H1 (cell line): ENCODE measurements at regions of chr11 and their contacts with region 1.

Region 1: GRCh38 chr11:44133335-44133946 is 38.0 kb downstream of the EXT2 start:
- DNase-seq: no peak
- H3K4me3 ChIP-seq: no peak overlapping the region
- H3K27ac ChIP-seq: no peak overlapping the region
- H3K4me1 ChIP-seq: no peaks in the 10 kb centered on the region
- H3K27me3 ChIP-seq: no peaks in the 10 kb centered on the region
- CTCF ChIP-seq: peak in 2 of 3 experiments; percentile 57 to 65; a peak in 2 of 4 replicates
- EP300 ChIP-seq: no peak
- POLR2A ChIP-seq: no peak
- RAD21 ChIP-seq: peak; percentile 75 to 83

Region 2: GRCh38 chr11:44110231-44110679 is 23.2 kb before region 1 on chr11:
- CTCF ChIA-PET with region 1: interaction called, 10 read pairs
- POLR2A ChIA-PET with region 1: no interaction called
- DNase-seq: peak in 1 of 2 experiments; percentile 71
- H3K4me3 ChIP-seq: no peak overlapping the region
- H3K27ac ChIP-seq: no peak overlapping the region
- H3K4me1 ChIP-seq: peaks cover 0 to 2% (median 0%) of the 10 kb centered on the region in 4 experiments; a peak in 1 of 7 replicates
- H3K27me3 ChIP-seq: peaks cover 0 to 1% (median 0%) of the 10 kb centered on the region in 4 experiments; a peak in 1 of 7 replicates
- CTCF ChIP-seq: peak; percentile 75 to 81 (median 78)
- EP300 ChIP-seq: no peak
- POLR2A ChIP-seq: no peak
- RAD21 ChIP-seq: peak; percentile 82 to 85

Region 3: DNA sequence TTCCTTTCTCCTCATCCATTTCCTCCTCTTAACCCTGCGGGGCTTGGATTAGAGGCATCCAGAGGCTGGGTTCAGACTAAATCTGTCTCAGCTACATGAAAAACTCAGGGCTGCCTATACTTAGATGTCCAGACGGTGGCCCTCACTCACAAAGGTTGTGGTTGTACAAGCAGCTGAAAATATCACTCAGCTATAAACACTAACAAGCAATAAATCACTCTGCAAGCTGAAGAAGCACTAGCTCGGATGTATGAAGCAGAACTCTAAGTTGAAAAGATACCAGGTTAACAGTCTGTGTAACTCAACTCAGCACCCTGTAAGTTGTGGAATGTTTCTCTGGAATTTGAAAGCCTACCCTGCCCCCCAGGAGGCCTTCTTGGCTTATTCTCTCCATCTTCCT is 44.9 kb after region 1 on chr11:
- CTCF ChIA-PET with region 1: interaction called, 22 read pairs
- POLR2A ChIA-PET with region 1: no interaction called
- DNase-seq: no peak
- H3K4me3 ChIP-seq: peak overlapping the region in 1 of 4 experiments; percentile 10; a peak in 1 of 8 replicates
- H3K27ac ChIP-seq: no peak overlapping the region
- H3K4me1 ChIP-seq: peaks cover 3 to 12% (median 8%) of the 10 kb centered on the region in 4 experiments; a peak in 5 of 7 replicates
- H3K27me3 ChIP-seq: no peaks in the 10 kb centered on the region
- CTCF ChIP-seq: no peak
- EP300 ChIP-seq: no peak
- POLR2A ChIP-seq: no peak
- RAD21 ChIP-seq: peak in 1 of 2 experiments; percentile 4; a peak in 1 of 4 replicates

Region 4: GRCh38 chr11:44269369-44270351 is 136.2 kb after region 1 on chr11:
- CTCF ChIA-PET with region 1: interaction called, 20 read pairs
- POLR2A ChIA-PET with region 1: no interaction called
- DNase-seq: no peak
- H3K4me3 ChIP-seq: no peak overlapping the region
- H3K27ac ChIP-seq: no peak overlapping the region
- H3K4me1 ChIP-seq: no peaks in the 10 kb centered on the region; a peak in 2 of 7 replicates
- H3K27me3 ChIP-seq: no peaks in the 10 kb centered on the region
- CTCF ChIP-seq: no peak
- EP300 ChIP-seq: no peak
- POLR2A ChIP-seq: no peak
- RAD21 ChIP-seq: no peak

Region 5: DNA sequence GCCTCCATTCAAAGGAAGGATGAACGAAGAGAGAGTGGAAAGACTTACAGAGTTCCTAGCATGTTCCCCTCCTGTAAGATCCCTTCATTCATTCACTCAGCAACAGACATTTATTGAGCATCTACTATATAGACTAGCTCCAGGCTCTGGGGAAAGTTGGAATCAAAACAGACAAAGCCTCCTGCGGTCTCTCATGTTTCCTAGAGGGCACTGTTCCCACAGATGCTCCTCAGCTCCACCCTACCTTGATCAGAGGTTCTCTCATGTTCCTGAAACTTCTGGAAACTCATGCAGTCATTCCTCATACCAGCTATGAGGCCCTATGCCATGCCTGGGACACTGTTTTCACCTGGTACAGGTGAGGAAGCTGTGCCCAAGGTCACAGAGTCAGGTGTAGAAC is 165.4 kb after region 1 on chr11:
- CTCF ChIA-PET with region 1: interaction called, 28 read pairs
- POLR2A ChIA-PET with region 1: no interaction called
- DNase-seq: no peak
- H3K4me3 ChIP-seq: no peak overlapping the region
- H3K27ac ChIP-seq: no peak overlapping the region
- H3K4me1 ChIP-seq: peaks cover 0 to 7% (median 1%) of the 10 kb centered on the region in 4 experiments; a peak in 2 of 7 replicates
- H3K27me3 ChIP-seq: peaks cover 21 to 43% (median 36%) of the 10 kb centered on the region in 4 experiments
- CTCF ChIP-seq: no peak
- EP300 ChIP-seq: no peak
- POLR2A ChIP-seq: no peak
- RAD21 ChIP-seq: no peak